ENCODE measurements at regions of chr10 and their contacts with region 1.

Region 1: DNA sequence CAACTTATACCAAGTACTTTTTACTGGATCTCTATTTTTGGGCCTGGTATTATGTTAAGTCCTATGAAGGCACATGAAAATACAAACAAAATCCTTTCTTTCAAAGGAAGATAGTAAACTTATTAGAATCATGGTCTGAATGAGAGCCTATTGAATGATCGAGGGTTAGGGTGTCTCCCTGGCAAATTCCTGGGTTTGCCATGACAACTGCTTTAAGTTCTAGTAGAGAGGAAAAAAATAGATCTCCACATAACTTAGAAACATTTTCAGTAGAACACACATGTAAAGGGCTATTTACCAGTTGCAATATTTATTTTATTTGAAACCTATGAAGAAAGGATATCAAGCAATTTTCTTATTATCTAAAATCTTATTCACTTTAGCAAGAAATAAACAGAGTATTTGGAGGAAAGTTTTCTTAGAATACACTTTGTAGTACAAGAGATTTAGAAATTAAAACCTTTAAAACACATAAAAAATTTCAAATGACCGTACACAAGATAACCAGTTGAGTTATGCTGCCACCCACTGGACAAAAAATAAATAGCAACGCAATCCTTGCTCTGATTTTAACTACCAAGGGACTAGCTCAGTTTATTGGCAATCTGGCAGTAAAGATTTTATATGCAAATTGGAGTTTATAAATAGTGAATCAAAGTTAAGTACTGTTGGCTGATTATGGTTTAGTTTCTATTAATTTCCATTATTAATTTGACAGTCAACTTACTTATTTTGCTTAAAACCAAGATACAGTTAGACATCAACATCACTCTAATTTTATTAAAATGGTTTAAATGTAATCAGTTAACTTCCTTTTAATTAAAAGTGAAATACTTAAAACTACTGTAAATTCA is 33.9 kb downstream of the CACUL1 start:
- DNase-seq: peak in 4 of 10 donors; percentile 31 to 74 (median 49)
- H3K4me3 ChIP-seq: no peak overlapping the region
- H3K27ac ChIP-seq: peak overlapping the region in 1 of 59 donors; percentile 4
- H3K27me3 ChIP-seq: no peaks in the 10 kb centered on the region
- CTCF ChIP-seq: peak; percentile 76 to 99 (median 92)

Region 2: GRCh38 chr10:118568327-118568848 is 152.5 kb before region 1 on chr10:
- intact Hi-C with region 1: loop called (anchors 1 to 2 kb)
- DNase-seq: no peak
- H3K4me3 ChIP-seq: peak overlapping the region in 6 of 59 donors; percentile 18 to 39 (median 26)
- H3K27ac ChIP-seq: peak overlapping the region in 3 of 59 donors; percentile 17 to 74 (median 47)
- H3K27me3 ChIP-seq: peaks cover 0 to 3% (median 0%) of the 10 kb centered on the region in 45 donors
- CTCF ChIP-seq: peak; percentile 69 to 94 (median 84)

Region 3: DNA sequence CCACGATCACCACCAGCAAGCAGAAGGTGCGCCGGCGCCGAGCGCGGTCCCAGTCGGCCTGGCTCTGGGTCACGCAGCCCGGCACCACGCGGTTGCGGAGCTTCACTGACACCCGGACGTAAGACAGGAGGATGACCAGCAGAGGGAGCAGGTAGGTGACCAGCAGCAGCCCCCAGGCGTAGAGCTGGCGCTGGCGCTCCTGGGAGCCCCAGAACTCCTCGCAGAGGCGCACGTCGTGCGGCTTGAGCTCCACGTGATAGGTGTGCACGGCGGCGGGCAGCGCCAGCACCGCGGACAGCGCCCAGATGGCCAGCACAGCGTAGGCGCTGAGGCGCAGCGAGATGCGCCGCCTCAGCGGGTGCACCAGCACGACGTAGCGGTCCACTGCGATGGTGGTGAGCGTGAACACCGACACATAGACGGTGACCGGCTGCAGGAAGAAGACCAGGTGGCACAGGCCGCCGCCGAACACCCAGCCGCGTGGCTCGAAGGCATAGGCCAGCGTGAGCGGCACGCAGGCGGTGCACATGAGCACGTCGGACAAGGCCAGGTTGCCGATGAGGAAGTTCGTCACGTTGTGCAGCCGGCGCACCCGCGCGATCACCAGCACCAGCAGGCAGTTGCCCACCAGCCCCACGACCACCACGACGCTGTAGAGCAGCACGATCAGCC is 126.4 kb before region 1 on chr10:
- intact Hi-C with region 1: loop called in 1 of 2 experiments (anchors 5 kb)
- DNase-seq: peak in 4 of 10 donors; percentile 20 to 36 (median 26)
- H3K4me3 ChIP-seq: peak overlapping the region in 32 of 59 donors; percentile 5 to 59 (median 44)
- H3K27ac ChIP-seq: no peak overlapping the region
- H3K27me3 ChIP-seq: peaks cover 8 to 85% (median 56%) of the 10 kb centered on the region in 45 donors
- CTCF ChIP-seq: peak in 52 of 56 donors; percentile 22 to 69 (median 52)

Region 4: DNA sequence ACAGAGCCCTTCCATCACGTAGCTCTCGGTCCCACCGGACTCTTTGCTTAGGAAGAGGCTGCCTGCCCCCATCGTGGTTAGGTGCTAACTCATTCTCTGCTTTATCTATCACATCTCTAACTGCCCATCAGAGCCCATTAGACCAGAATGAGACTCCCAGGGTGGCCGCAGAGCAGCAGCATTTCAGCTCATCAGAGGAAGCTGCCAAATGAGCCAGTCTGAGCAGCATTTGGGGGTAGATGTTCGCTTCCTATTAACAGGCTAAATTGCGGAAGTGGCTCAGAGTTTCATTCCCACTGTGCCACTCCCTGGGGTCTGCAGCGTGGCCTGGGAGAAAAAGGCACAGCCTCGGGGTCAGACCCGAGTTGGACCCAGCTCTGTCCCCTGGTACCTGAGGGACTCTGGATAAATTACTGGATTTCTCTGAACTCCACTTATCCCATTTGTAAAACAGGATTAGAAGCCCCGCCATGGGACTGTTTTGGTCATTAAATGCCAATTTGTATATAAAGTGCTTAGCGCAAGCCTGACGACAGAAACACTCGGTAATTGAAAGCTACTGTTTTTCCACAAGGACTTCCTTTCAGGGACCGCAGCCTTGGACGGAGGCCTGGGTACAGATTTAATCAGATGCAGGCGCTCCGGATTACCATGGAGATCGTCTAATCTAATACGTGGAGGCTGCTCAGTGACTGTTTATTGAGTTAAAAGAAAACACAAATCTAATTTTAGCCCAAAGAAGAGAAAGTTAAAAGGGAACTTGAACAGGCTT is 51.7 kb before region 1 on chr10:
- intact Hi-C with region 1: loop called in 1 of 2 experiments (anchors 5 kb)
- DNase-seq: peak in 6 of 10 donors; percentile 61 to 81 (median 68)
- H3K4me3 ChIP-seq: peak overlapping the region in 51 of 59 donors; percentile 3 to 61 (median 29)
- H3K27ac ChIP-seq: peak overlapping the region in 33 of 59 donors; percentile 2 to 84 (median 62)
- H3K27me3 ChIP-seq: peaks cover 0 to 11% (median 0%) of the 10 kb centered on the region in 45 donors
- CTCF ChIP-seq: peak in 1 of 56 donors; percentile 9

Region 5: GRCh38 chr10:118853916-118854315 is 133.0 kb after region 1 on chr10:
- intact Hi-C with region 1: no loop called
- DNase-seq: no peak
- H3K4me3 ChIP-seq: no peak overlapping the region
- H3K27ac ChIP-seq: no peak overlapping the region
- H3K27me3 ChIP-seq: peaks cover 0 to 4% (median 0%) of the 10 kb centered on the region in 45 donors
- CTCF ChIP-seq: no peak